ENCODE measurements at regions of chr17 and their contacts with region 1.

Region 1: DNA sequence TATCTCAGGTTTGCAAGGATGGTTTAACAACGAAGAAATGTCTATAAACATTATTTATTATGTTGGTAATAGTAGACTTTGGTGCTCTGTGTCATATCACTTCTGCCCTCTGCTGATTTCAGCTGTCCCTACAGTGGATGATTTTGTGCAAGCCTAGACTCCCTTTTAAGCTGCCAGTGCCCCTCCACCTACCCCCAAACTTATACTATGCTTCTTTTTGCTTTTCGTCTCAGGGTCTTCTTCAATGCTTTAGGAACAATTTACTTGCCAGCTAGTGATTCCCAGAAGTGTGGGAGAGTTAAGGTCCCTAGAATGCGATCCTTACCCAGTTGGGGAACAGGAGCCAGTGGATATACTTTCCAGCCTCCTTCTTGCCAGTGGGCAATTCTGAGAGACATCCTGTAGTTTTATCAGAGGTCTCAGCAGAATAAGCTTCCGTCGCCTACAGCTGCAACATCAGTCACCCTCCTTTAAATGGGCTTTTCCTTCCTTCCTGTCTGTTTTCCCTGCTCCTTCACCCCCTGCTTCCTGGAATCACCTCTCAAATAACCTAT is 4.1 kb downstream of the ICAM2 start:
- DNase-seq: no peak
- H3K4me3 ChIP-seq: no peak overlapping the region
- CTCF ChIP-seq: peak; percentile 16

Region 2: DNA sequence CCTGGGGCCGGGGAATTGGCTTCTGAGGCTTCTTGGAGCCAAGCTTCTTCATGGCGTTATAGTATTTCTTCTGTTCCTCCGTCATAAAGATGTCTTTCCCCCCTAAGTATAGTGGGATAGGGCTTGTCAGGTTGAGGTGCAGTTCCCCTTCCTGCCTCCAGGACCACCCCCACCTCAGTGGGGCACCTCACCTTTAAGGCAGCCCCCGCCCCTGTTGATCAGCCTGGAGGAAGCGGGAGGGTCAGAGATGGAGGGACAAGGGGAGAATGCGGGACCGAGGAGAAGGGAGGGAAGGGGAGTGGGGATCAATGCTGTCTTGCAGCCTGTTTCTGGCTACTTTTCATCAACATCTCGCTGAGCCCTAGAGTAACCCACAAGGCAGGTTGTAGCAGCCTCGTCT is 72.6 kb before region 1 on chr17:
- in situ Hi-C with region 1: loop called (anchors 5 kb)
- DNase-seq: no peak
- H3K4me3 ChIP-seq: no peak overlapping the region
- CTCF ChIP-seq: no peak

Region 3: DNA sequence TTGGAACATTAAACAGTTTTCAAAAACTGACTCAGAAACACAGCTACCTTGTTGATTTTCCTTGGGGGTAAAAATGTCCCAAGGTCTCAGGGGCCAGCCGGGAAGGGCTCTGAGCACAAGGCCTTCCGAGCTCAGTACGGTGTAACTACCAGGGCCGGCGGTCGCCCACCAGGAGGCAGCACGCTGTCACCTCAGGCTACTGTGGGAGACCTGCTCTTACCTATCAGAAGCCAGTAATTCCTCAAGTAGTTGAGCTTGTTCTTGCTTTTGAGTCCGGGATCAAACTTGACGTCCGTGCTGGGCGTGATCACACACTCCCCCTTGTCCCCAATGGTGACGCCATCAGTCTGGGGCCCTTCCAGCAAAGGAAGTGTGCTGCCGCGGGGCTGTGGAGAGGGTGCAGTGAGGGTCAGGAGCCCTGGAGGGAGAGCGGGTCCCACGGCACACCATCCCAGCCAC is 47.5 kb after region 1 on chr17:
- in situ Hi-C with region 1: no loop called
- DNase-seq: no peak
- H3K4me3 ChIP-seq: no peak overlapping the region
- CTCF ChIP-seq: peak; percentile 34

Region 4: DNA sequence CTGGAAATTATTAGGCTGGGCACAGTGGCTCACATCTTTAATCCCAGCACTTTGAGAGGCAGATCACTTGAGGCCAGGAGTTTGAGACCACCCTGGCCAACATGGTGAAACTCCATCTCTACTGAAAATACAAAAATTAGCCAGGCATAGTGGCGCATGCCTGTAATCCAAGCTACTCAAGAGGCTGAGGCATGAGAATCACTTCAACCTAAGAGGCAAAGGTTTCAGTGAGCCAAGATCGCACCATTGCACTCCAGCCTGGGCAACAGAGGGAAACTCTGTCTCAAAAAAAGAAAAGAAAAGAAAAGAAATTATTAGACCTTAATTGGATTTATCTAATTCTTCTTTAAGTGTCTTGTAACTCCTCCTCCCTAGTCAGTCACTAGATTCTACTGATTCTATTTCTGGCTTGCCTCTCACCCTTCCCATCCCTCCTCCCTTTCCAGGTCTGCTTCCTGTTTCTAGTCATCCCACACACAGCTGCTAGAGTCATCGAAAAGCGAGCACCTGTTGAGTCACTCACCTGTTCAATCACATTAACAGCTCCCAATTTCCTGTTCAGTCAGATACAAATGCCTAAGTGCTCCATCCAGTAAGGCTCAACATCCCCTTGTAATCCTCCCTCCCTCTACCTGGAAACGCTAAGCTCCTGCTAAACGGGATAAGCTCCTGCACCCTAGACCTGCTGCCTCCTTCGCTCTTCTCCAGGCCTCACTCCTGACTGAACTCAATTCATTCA is 79.0 kb after region 1 on chr17:
- in situ Hi-C with region 1: no loop called
- DNase-seq: no peak
- H3K4me3 ChIP-seq: no peak overlapping the region
- CTCF ChIP-seq: no peak